Esophagus muscularis mucosa (tissue), 4 donors: ENCODE measurements at regions of chr12 and their contacts with region 1.

Region 1: GRCh38 chr12:46895726-46896125 is 69.9 kb upstream of the SLC38A4 start:
- DNase-seq: no peak
- H3K4me3 ChIP-seq: no peak overlapping the region
- H3K27ac ChIP-seq: no peak overlapping the region
- H3K4me1 ChIP-seq: no peaks in the 10 kb centered on the region
- H3K27me3 ChIP-seq: no peaks in the 10 kb centered on the region
- CTCF ChIP-seq: no peak
- EP300 ChIP-seq: no peak
- POLR2A ChIP-seq: no peak

Region 2: DNA sequence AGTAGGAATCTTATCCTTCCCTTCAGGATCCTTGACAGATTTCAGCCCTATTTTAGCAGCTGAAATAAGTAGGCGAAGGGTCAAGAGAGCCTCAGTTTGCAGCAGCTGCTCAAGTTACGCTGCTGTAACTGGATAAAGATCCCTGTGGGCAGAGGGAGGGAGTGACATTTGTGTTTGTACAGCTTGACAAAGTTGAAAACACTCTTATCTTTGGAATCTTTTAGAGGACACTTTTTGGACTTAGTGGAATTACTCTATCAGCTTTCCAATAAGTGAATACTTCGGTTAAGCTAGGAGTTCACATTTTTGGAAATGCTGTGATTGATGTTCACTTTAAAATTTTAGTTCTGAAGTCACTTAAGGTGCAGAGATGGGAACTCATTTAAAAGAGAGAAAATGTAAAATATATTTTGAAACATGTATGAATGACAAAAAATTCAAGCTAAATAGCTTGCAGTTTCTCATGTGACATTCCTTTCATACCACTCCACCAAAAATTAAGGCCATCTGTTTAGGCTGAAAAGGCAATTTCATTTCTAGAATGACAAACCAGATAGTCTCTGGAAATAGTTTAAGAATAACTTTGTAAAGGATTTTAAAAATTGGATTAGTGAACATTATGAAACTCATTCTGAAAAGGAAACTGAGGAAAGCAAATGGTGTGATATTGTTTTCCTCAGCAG is 125.1 kb before region 1 on chr12:
- intact Hi-C with region 1: no loop called
- DNase-seq: no peak
- H3K4me3 ChIP-seq: no peak overlapping the region
- H3K27ac ChIP-seq: no peak overlapping the region
- H3K4me1 ChIP-seq: peaks cover 0 to 15% (median 7%) of the 10 kb centered on the region in 4 donors
- H3K27me3 ChIP-seq: no peaks in the 10 kb centered on the region
- CTCF ChIP-seq: no peak
- EP300 ChIP-seq: no peak
- POLR2A ChIP-seq: no peak

Region 3: GRCh38 chr12:46915082-46915481 is 19.4 kb after region 1 on chr12:
- intact Hi-C with region 1: loop called (anchors 1 kb)
- DNase-seq: no peak
- H3K4me3 ChIP-seq: no peak overlapping the region
- H3K27ac ChIP-seq: no peak overlapping the region
- H3K4me1 ChIP-seq: no peaks in the 10 kb centered on the region
- H3K27me3 ChIP-seq: no peaks in the 10 kb centered on the region
- CTCF ChIP-seq: no peak
- EP300 ChIP-seq: no peak
- POLR2A ChIP-seq: no peak